Esophagus squamous epithelium (tissue), 5 donors: ENCODE measurements at regions of chr7 and their contacts with region 1.

Region 1: DNA sequence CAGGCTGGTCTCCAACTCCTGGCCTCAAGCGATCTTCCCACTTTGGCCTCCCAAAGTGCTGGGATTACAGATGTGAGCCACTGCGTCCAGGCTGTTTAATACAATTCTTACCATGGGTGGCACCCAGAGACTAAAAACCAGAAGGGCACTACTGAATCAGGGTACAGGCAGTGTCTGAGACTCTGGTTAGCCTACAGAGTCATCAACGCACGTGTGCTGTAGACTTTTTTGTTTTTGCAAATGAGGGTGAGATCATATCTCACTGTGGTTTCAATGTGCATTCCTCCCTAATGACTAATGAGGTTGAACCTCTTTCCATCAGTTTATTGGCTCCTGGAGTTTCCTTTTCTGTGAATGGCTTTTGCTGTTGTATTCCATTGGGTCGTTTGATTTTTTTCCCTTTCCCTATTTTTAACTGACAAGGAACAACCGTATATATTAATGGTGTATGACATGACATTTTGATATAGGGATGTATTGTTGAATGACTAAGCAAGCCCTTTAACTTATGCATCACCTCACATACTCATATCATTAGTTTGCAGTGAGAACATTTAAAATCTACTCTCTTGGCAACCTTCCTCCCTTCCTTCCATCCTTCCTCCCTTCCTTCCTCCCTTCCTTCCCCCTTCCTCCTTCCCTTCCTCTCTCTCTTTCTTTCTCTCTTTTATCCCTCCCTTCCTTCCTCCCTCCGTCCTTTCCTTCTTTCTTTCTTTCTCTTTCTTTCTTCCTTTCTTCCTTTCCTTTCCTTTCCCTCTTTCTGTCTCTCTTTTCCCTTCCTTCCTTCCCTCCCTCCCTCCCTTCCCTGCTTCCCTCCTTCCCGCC is 9.3 kb upstream of the METTL27 start:
- DNase-seq: no peak
- H3K4me3 ChIP-seq: no peak overlapping the region
- H3K27ac ChIP-seq: peak overlapping the region; percentile 72 to 89 (median 85)
- H3K4me1 ChIP-seq: peaks cover 22 to 43% (median 35%) of the 10 kb centered on the region in 3 donors
- H3K27me3 ChIP-seq: peaks cover 0 to 10% (median 0%) of the 10 kb centered on the region in 4 donors
- CTCF ChIP-seq: no peak
- POLR2A ChIP-seq: no peak

Region 2: GRCh38 chr7:73738612-73739374 is 112.8 kb before region 1 on chr7 and contains the start of gene ABHD11:
- intact Hi-C with region 1: loop called (anchors 10 kb)
- DNase-seq: peak; percentile 91
- H3K4me3 ChIP-seq: peak within 1 kb of the TSS; percentile 72 to 86 (median 79)
- H3K27ac ChIP-seq: peak within 1 kb of the TSS; percentile 92 to 94 (median 94)
- H3K4me1 ChIP-seq: peaks cover 16 to 70% (median 28%) of the 10 kb centered on the region in 3 donors
- H3K27me3 ChIP-seq: no peaks in the 10 kb centered on the region
- CTCF ChIP-seq: peak in 1 of 6 experiments; percentile 9
- POLR2A ChIP-seq: peak in 2 of 4 donors; percentile 26 to 91
- total RNA-seq, gene ABHD11: 8.3 to 22.6 (median 19.3) TPM